ENCODE measurements at regions of chr7 and their contacts with region 1.

Region 1: DNA sequence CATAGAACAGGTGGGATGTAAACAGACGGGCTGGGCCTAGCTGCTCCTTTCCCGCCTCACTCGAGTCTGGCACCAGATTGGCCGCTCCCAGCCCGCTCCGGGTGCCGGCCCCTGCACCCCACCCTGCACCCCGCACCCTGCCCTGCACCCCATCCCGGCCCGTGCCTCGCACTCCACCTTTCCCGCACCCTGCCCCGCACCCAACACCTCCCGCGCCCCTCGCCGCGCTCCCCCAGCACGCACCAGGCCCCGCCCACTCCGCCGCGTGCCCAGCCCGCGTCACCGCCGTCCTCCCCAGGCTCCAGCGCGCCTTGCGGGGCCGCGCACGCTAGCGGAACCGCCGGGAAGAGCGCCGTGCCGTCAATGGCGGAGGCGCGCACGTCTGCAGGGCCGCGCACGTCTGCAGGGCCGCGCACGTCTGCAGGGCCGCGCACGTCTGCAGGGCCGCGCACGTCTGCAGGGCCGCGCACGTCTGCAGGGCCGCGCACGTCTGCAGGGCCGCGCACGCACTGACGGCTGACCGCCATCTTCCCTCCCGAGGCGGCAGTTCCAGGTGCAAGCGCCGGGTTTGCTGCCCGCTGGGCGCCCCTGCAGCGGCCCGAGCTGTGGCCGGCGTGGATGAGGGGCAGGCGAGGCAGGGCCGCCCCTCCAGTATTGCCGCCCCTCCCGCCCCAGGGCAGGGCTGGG is at the start of gene UBE3C:
- DNase-seq: peak; percentile 94
- ATAC-seq: peak; percentile 87
- H3K4me3 Mint-ChIP-seq: peak within 1 kb of the TSS; percentile 84
- H3K27ac Mint-ChIP-seq: peak within 1 kb of the TSS; percentile 89
- H3K4me1 Mint-ChIP-seq: peaks cover 41% of the 10 kb centered on the region
- H3K27me3 Mint-ChIP-seq: no peaks in the 10 kb centered on the region
- total RNA-seq, gene UBE3C: 53.9 to 60.7 TPM

Region 2: DNA sequence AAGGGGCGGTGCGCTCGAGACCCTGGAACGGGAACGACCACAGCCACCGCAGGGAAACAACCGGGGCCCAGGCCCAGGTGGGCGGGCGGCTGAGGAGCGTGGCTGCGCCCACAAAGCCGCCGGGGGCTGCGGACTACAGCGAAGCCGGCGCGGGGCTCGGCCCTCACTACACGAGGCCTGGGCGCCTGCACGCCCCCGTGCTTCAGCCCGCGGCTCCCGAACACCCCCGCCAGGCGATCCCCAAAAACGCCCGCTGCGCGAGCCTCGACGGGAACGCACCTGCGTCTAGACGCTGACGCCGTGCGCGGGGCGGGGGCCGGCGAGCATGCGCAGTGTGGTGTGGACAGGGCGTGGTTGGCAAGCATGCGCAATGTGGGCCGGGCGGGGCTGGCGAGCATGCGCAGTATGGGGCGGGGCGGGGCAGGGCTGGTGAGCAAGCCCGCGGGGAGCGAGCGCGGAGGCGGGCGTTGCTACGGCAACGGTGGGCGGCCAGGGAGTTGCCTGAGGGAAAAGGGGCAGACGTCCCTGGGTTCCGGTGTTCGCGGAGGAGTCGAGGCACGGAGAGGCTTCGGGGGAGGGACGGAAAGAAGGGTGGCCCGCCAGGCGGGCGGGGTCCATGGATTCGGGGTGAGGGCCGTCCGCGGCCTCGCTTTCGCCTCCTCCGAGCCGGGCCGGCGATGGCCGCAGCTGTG is 498.2 kb before region 1 on chr7 and contains the start of gene RNF32:
- CTCF ChIA-PET with region 1: no interaction called
- POLR2A ChIA-PET with region 1: no interaction called
- intact Hi-C with region 1: loop called in 1 of 2 experiments (anchors 1 kb)
- DNase-seq: peak; percentile 100
- ATAC-seq: peak; percentile 90
- H3K4me3 Mint-ChIP-seq: peak within 1 kb of the TSS; percentile 76
- H3K27ac Mint-ChIP-seq: peak within 1 kb of the TSS; percentile 87
- H3K4me1 Mint-ChIP-seq: peaks cover 15% of the 10 kb centered on the region
- H3K27me3 Mint-ChIP-seq: peaks cover 29% of the 10 kb centered on the region
- total RNA-seq, gene RNF32: 0.71 to 0.90 TPM

Region 3: GRCh38 chr7:156969972-156970420 is 168.6 kb before region 1 on chr7:
- CTCF ChIA-PET with region 1: interaction called, 3 read pairs
- POLR2A ChIA-PET with region 1: no interaction called
- intact Hi-C with region 1: loop called in 1 of 2 experiments (anchors 5 kb)
- DNase-seq: no peak
- ATAC-seq: peak; percentile 36
- H3K4me3 Mint-ChIP-seq: no peak overlapping the region
- H3K27ac Mint-ChIP-seq: no peak overlapping the region
- H3K4me1 Mint-ChIP-seq: no peaks in the 10 kb centered on the region
- H3K27me3 Mint-ChIP-seq: no peaks in the 10 kb centered on the region

Region 4: DNA sequence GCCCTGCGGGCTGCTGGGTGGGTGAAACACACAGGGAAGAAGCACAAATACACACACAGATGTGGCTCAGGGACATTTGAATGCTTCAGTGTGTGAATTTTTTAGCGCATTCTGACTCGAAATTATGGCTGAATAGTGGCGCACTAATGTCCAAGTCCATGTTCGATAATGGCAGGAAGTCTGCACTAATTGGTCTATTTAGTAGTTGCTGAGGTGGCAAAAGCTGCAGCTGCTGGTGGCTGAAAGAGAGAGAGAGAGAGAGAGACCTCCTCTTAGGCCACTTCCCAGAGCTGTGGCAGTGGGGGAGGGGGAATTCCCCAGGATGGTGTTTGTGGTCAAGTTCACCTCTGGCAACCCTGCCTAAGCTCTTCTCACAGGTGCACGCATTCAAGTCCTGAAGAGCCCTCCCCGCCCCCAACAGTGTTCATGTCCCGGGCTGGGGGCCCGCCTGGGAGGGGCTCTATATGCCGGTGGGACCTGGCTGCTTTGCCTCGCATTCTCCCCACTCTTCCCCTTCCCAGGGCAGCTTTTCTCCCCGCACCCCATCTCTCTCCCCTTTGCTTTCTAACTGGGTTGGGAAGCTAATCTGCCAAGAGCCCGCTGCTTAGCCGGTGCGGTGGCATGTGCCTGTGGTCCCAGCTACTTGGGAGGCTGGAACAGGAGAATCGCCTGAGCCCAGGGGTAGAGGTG is 122.1 kb before region 1 on chr7:
- CTCF ChIA-PET with region 1: no interaction called
- POLR2A ChIA-PET with region 1: no interaction called
- intact Hi-C with region 1: loop called in 1 of 2 experiments (anchors 2 kb)
- DNase-seq: peak; percentile 85
- ATAC-seq: peak; percentile 76
- H3K4me3 Mint-ChIP-seq: no peak overlapping the region
- H3K27ac Mint-ChIP-seq: no peak overlapping the region
- H3K4me1 Mint-ChIP-seq: peaks cover 25% of the 10 kb centered on the region
- H3K27me3 Mint-ChIP-seq: peaks cover 71% of the 10 kb centered on the region

Region 5: DNA sequence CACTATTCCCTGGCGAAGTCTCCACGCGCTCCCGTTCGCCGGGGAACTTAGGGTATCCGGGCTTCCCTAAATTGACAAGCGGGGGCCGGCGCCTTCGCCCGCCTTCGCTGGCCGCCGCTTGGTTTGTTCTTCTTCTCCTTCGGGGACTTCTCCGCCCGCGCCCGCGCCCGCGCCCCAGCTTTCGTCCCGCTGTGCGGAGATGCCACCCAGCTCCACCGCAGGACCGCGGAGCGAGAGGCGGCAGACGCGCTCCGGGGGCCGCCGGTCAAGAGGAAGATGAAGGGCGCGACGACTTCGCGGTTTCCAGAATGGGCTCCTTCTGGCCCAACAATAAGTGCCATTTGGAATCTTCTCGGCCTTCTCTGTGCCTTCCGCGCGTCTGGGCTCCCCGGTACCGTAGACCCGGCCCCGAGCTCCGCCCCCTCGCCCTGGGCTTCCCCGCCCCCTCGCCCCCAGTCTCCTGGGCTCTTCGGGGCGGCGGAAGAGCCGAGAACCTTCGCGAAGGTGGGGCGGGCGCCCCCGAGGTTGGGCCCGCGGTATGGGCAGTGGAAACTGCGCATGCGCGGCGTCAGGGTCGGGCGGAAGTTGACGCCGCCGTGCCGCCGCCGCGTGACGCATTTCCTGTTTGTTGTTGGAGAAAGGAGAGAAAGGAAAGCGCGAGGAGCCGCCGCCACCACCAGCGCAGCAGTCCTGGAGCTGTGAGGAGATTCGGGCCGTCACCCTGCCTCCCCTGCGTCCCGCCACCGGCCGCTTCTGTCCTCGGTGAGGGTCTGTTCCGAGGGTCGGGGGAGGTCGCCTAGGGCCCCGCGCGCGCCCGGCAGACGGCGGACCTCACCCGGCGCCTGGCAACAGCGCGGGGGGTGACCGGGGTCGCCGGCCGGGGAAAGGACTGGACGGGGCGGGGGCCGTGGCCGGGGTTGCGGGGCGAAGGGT is 198.1 kb after region 1 on chr7 and contains the start of gene DNAJB6:
- CTCF ChIA-PET with region 1: interaction called, 3 read pairs
- POLR2A ChIA-PET with region 1: no interaction called
- intact Hi-C with region 1: loop called (anchors 1 to 2 kb)
- DNase-seq: peak; percentile 97
- ATAC-seq: peak; percentile 75
- H3K4me3 Mint-ChIP-seq: peak within 1 kb of the TSS; percentile 90
- H3K27ac Mint-ChIP-seq: peak within 1 kb of the TSS; percentile 96
- H3K4me1 Mint-ChIP-seq: peaks cover 40% of the 10 kb centered on the region
- H3K27me3 Mint-ChIP-seq: no peaks in the 10 kb centered on the region
- total RNA-seq, gene DNAJB6: 89.9 to 92.9 TPM

Region 6: GRCh38 chr7:157347217-157347904 is 208.8 kb after region 1 on chr7:
- CTCF ChIA-PET with region 1: no interaction called
- POLR2A ChIA-PET with region 1: no interaction called
- intact Hi-C with region 1: no loop called
- DNase-seq: peak; percentile 67
- ATAC-seq: peak; percentile 91
- H3K4me3 Mint-ChIP-seq: no peak overlapping the region
- H3K27ac Mint-ChIP-seq: peak overlapping the region; percentile 56
- H3K4me1 Mint-ChIP-seq: peaks cover 80% of the 10 kb centered on the region
- H3K27me3 Mint-ChIP-seq: no peaks in the 10 kb centered on the region

Region 7: GRCh38 chr7:157625973-157626742 is 487.6 kb after region 1 on chr7:
- CTCF ChIA-PET with region 1: no interaction called
- POLR2A ChIA-PET with region 1: no interaction called
- intact Hi-C with region 1: no loop called
- DNase-seq: no peak
- ATAC-seq: peak; percentile 27
- H3K4me3 Mint-ChIP-seq: peak overlapping the region; percentile 3
- H3K27ac Mint-ChIP-seq: peak overlapping the region; percentile 35
- H3K4me1 Mint-ChIP-seq: peaks cover 72% of the 10 kb centered on the region
- H3K27me3 Mint-ChIP-seq: no peaks in the 10 kb centered on the region

Region 8: GRCh38 chr7:158704704-158705468 is 1566.3 kb after region 1 on chr7 and contains the start of gene NCAPG2:
- CTCF ChIA-PET with region 1: no interaction called
- POLR2A ChIA-PET with region 1: no interaction called
- intact Hi-C with region 1: loop called in 1 of 2 experiments (anchors 10 kb)
- DNase-seq: peak; percentile 99
- ATAC-seq: peak; percentile 98
- H3K4me3 Mint-ChIP-seq: peak within 1 kb of the TSS; percentile 85
- H3K27ac Mint-ChIP-seq: peak within 1 kb of the TSS; percentile 81
- H3K4me1 Mint-ChIP-seq: peaks cover 44% of the 10 kb centered on the region
- H3K27me3 Mint-ChIP-seq: no peaks in the 10 kb centered on the region
- total RNA-seq, gene NCAPG2: 85.4 to 127 TPM

Measured in activated CD4-positive, alpha-beta T cell treated with anti-CD3 and anti-CD28 coated beads for 36 hours (primary cell).